WTC11 (cell line): ENCODE measurements at regions of chr11 and their contacts with region 1.

Region 1: DNA sequence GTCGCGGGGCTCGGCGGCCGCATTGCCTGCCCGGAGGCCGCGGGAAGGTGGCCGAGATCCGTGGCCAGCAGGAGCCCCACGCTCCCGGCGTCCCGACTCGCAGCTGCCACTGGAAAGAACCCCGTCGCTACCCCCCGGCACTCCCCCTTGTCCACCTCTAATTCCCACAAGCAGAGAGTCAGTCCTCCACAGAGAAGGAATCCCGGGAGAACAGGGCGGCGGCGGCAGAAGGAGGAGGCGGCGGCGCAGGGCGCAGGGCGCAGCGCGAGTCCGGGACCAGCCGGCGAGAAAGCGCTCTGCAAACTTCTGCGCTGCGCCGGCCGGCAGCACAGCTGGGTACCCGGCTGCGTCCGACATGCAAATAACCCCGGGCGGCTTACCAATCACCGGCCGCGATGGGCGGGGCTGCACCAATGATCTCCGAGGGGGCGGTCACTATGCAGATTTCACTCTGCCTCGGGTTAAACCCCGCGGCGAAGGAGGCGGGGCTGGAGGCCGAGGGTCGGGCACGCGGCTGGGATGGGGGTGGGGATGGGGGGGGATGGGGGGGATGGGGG is at the start of gene ABTB2:
- DNase-seq: peak; percentile 99
- ATAC-seq: peak; percentile 86
- H3K4me3 Mint-ChIP-seq: peak within 1 kb of the TSS; percentile 85
- H3K27ac Mint-ChIP-seq: peak within 1 kb of the TSS; percentile 98
- H3K4me1 Mint-ChIP-seq: peaks cover 23% of the 10 kb centered on the region
- H3K27me3 Mint-ChIP-seq: peaks cover 42% of the 10 kb centered on the region
- CTCF ChIP-seq: no peak
- total RNA-seq, gene ABTB2: 7.9 to 12.8 TPM (median 8.4 TPM) in 3 replicates

Region 2: GRCh38 chr11:34149786-34150185 is 208.0 kb before region 1 on chr11:
- CTCF ChIA-PET with region 1: interaction called, 16 read pairs
- POLR2A ChIA-PET with region 1: no interaction called
- DNase-seq: peak; percentile 44
- ATAC-seq: peak; percentile 89
- H3K4me3 Mint-ChIP-seq: no peak overlapping the region
- H3K27ac Mint-ChIP-seq: no peak overlapping the region
- H3K4me1 Mint-ChIP-seq: no peaks in the 10 kb centered on the region
- H3K27me3 Mint-ChIP-seq: no peaks in the 10 kb centered on the region
- CTCF ChIP-seq: no peak; the same call in 1 of the 2 replicates

Region 3: DNA sequence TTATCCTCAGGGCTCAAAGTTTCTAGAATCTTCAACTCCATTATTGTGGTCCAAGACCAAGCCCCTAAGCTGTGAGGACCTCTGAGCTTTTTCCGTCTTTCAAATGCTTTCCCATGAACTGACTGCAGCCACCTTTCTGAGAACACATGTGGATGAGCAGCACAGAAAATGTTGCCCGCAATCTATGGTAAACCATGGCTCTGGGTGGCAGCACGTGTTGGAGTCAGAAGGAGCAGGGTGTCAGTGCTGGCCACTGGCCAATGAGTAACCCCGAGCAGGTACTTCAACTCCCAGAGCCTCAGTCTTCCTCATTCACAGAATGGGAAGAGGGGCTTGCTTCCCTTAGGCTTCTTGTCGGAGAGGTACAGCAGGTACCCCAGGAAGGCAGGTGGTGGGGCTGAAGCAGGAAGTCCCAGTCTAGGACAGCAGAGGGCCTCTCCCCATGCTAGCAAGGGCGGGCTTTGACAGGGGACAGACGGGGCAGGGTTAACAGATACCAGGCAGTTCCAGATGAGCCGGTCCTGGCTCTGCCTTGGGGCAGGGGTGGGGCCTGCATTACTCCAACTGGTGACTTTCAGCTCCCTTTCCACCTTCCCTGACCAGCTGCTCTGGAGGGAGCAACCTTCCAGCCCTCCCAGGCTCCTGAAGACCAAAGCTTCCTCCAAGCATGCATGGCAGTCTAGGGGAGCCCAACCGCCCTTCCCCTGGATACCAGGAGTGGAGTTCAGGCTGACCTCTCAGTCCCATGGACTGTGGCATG is 192.1 kb before region 1 on chr11:
- CTCF ChIA-PET with region 1: interaction called, 236 read pairs
- POLR2A ChIA-PET with region 1: no interaction called
- DNase-seq: peak; percentile 25
- ATAC-seq: peak; percentile 69
- H3K4me3 Mint-ChIP-seq: no peak overlapping the region
- H3K27ac Mint-ChIP-seq: no peak overlapping the region
- H3K4me1 Mint-ChIP-seq: no peaks in the 10 kb centered on the region
- H3K27me3 Mint-ChIP-seq: no peaks in the 10 kb centered on the region; the same call in 1 of the 2 replicates
- CTCF ChIP-seq: no peak

Region 4: GRCh38 chr11:34185926-34186841 is 171.6 kb before region 1 on chr11:
- CTCF ChIA-PET with region 1: interaction called, 22 read pairs
- POLR2A ChIA-PET with region 1: interaction called, 14 read pairs
- DNase-seq: peak; percentile 30
- ATAC-seq: peak; percentile 60
- H3K4me3 Mint-ChIP-seq: peak overlapping the region; percentile 33; the same call in 1 of the 2 replicates
- H3K27ac Mint-ChIP-seq: peak overlapping the region; percentile 68
- H3K4me1 Mint-ChIP-seq: peaks cover 51% of the 10 kb centered on the region
- H3K27me3 Mint-ChIP-seq: no peaks in the 10 kb centered on the region
- CTCF ChIP-seq: no peak

Region 5: GRCh38 chr11:34234086-34234740 is 123.6 kb before region 1 on chr11:
- CTCF ChIA-PET with region 1: interaction called, 13 read pairs
- POLR2A ChIA-PET with region 1: interaction called, 7 read pairs
- DNase-seq: peak; percentile 57
- ATAC-seq: peak; percentile 91
- H3K4me3 Mint-ChIP-seq: peak overlapping the region; percentile 20
- H3K27ac Mint-ChIP-seq: peak overlapping the region; percentile 68; the same call in 1 of the 2 replicates
- H3K4me1 Mint-ChIP-seq: peaks cover 36% of the 10 kb centered on the region
- H3K27me3 Mint-ChIP-seq: no peaks in the 10 kb centered on the region
- CTCF ChIP-seq: no peak

Region 6: DNA sequence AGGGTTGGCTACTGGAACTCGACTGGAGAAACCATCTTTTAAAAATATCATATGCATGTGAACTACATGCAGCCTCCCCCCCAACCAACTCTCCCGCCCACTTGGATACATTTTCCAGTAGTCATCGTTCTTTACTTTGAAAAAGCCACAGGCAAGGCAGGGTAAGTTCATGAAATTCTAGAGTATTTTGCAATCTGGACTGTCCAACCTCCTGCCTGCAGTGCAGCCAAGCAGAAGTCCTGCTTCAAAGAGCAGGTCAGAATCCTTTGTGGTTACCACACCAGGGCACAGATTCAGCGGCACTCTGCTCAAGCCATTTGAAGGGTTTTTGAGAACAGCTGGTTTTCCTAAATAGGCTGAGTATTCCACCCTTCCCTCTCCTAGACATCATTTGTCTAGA is 143.7 kb after region 1 on chr11:
- CTCF ChIA-PET with region 1: no interaction called
- POLR2A ChIA-PET with region 1: no interaction called
- DNase-seq: no peak
- ATAC-seq: no peak
- H3K4me3 Mint-ChIP-seq: no peak overlapping the region
- H3K27ac Mint-ChIP-seq: no peak overlapping the region
- H3K4me1 Mint-ChIP-seq: no peaks in the 10 kb centered on the region
- H3K27me3 Mint-ChIP-seq: no peaks in the 10 kb centered on the region
- CTCF ChIP-seq: no peak